ENCODE measurements at regions of chr17 and their contacts with region 1.

Region 1: GRCh38 chr17:47840740-47841603 is at the start of gene SCRN2:
- DNase-seq: peak; percentile 92
- ATAC-seq: peak; percentile 96
- H3K4me3 Mint-ChIP-seq: peak within 1 kb of the TSS; percentile 92
- H3K27ac Mint-ChIP-seq: peak within 1 kb of the TSS; percentile 91
- H3K4me1 Mint-ChIP-seq: peaks cover 27% of the 10 kb centered on the region
- H3K27me3 Mint-ChIP-seq: peaks cover 16% of the 10 kb centered on the region
- CTCF ChIP-seq: peak; percentile 99
- total RNA-seq, gene SCRN2: 21.0 to 23.8 TPM

Region 2: GRCh38 chr17:47717261-47717697 is 123.7 kb before region 1 on chr17:
- CTCF ChIA-PET with region 1: no interaction called
- POLR2A ChIA-PET with region 1: no interaction called
- intact Hi-C with region 1: no loop called
- DNase-seq: peak; percentile 80
- ATAC-seq: peak; percentile 15
- H3K4me3 Mint-ChIP-seq: peak overlapping the region; percentile 62
- H3K27ac Mint-ChIP-seq: peak overlapping the region; percentile 94
- H3K4me1 Mint-ChIP-seq: peaks cover 90% of the 10 kb centered on the region
- H3K27me3 Mint-ChIP-seq: no peaks in the 10 kb centered on the region
- CTCF ChIP-seq: peak; percentile 63

Region 3: DNA sequence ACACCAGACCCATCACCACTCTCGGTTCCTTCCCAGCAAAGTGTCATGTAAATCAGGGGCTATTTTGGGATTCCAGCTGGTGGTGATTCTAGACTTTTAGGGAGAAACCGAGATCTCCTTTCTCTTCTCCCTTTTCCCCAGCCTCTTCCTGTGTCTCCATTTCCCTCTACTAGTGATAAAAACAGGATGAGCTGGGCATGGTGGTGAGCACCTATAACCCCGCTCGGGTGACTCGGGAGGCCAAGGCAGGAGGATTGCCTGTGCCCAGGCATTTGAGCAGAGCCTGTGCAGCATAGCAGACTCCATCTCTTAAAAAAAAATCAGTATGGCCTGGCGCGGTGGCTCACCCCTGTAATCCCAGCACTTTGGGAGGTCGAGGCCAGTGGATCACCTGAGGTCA is 101.8 kb before region 1 on chr17:
- CTCF ChIA-PET with region 1: no interaction called
- POLR2A ChIA-PET with region 1: no interaction called
- intact Hi-C with region 1: no loop called
- DNase-seq: no peak
- ATAC-seq: no peak
- H3K4me3 Mint-ChIP-seq: peak overlapping the region; percentile 8
- H3K27ac Mint-ChIP-seq: peak overlapping the region; percentile 7
- H3K4me1 Mint-ChIP-seq: peaks cover 57% of the 10 kb centered on the region
- H3K27me3 Mint-ChIP-seq: no peaks in the 10 kb centered on the region
- CTCF ChIP-seq: no peak

Region 4: GRCh38 chr17:47862621-47863440 is 21.9 kb after region 1 on chr17:
- CTCF ChIA-PET with region 1: interaction called, 24 read pairs
- POLR2A ChIA-PET with region 1: interaction called, 3 read pairs
- intact Hi-C with region 1: no loop called
- DNase-seq: no peak
- ATAC-seq: no peak
- H3K4me3 Mint-ChIP-seq: no peak overlapping the region
- H3K27ac Mint-ChIP-seq: no peak overlapping the region
- H3K4me1 Mint-ChIP-seq: peaks cover 12% of the 10 kb centered on the region
- H3K27me3 Mint-ChIP-seq: peaks cover 13% of the 10 kb centered on the region
- CTCF ChIP-seq: no peak

Region 5: DNA sequence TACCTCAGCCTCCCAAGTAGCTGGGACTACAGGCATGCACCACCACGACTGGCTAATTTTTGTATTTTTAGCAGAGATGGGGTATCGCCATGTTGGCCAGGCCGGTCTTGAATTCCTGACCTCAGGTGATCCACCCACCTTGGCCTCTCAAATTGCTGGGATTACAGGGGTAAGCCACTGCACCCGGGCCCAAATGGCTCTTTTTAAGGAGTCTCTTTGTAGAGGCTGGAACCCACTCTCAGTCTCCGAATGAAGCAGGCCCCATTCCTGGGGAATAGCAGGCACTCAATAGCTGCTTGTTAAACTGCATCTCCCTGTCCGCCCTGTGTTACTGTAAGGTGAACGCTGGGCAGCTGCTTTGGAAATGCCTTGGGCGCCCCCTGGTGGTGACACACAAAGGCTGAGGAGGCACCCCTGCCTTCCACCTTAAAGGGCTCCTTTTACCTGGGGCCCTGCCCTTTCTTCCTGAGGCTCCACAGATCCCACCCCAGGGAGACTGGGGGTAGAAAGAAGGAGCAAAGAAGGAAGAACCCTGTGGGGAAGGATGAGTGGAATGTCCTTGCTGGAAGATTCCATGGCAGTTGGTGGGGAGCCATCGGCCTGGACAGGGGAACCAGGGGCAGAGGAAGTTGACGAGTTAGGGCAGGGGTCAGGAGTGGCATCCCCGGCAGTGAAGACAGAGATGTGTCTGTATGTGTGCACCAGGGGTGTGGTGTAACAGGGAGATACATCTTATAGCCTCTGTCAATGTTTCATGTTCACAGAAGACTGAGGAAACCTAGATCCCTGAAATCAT is 49.0 kb after region 1 on chr17:
- CTCF ChIA-PET with region 1: interaction called, 586 read pairs
- POLR2A ChIA-PET with region 1: interaction called, 15 read pairs
- intact Hi-C with region 1: loop called (anchors 1 kb)
- DNase-seq: peak; percentile 96
- ATAC-seq: peak; percentile 98
- H3K4me3 Mint-ChIP-seq: no peak overlapping the region
- H3K27ac Mint-ChIP-seq: no peak overlapping the region
- H3K4me1 Mint-ChIP-seq: peaks cover 30% of the 10 kb centered on the region
- H3K27me3 Mint-ChIP-seq: no peaks in the 10 kb centered on the region
- CTCF ChIP-seq: peak; percentile 95

Region 6: DNA sequence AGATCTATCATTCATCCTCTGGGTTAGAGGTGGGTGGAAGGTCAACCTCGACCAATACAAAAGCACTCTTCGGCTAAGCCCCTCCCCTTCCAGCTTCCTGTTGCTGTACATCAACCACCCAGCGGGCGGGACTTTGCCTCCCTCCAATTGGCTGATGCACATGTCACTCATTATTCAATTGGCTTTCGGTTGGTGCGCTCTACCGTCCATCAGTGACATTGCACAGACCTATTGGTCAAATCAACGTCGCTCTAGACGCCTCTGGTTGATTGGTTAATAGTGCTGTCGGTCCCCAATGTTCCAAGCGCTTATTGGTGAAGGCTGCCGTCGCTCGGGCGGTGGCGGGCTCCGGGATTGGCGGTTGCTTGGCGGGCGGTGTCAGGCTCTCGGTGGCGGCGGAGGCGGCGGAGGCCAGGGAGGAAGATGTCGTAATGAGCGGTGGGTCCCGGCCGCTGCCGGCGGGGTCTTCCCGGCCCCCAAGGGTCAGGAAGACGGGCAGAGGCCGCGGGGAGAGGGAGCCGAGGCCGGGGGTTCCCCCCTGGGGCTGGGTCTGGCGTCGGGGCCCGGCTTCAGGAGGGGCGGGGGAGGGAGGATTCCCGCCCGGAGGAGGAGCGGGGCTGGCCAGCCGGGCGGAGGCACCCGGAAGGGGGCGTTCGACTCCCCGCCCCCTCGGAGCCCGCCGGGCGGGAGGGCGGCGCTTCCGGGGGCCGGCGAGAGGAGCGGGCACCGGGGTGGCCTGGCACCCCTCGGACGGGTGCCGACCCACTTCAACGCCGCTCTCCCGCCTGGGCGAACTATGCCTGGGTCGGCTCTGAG is 55.1 kb after region 1 on chr17 and contains the start of gene SP2:
- CTCF ChIA-PET with region 1: interaction called, 586 read pairs
- POLR2A ChIA-PET with region 1: interaction called, 15 read pairs
- intact Hi-C with region 1: no loop called
- DNase-seq: peak; percentile 100
- ATAC-seq: peak; percentile 91
- H3K4me3 Mint-ChIP-seq: peak within 1 kb of the TSS; percentile 95
- H3K27ac Mint-ChIP-seq: peak within 1 kb of the TSS; percentile 96
- H3K4me1 Mint-ChIP-seq: peaks cover 46% of the 10 kb centered on the region
- H3K27me3 Mint-ChIP-seq: no peaks in the 10 kb centered on the region
- CTCF ChIP-seq: no peak
- total RNA-seq, gene SP2: 11.5 to 13.2 TPM

Region 7: DNA sequence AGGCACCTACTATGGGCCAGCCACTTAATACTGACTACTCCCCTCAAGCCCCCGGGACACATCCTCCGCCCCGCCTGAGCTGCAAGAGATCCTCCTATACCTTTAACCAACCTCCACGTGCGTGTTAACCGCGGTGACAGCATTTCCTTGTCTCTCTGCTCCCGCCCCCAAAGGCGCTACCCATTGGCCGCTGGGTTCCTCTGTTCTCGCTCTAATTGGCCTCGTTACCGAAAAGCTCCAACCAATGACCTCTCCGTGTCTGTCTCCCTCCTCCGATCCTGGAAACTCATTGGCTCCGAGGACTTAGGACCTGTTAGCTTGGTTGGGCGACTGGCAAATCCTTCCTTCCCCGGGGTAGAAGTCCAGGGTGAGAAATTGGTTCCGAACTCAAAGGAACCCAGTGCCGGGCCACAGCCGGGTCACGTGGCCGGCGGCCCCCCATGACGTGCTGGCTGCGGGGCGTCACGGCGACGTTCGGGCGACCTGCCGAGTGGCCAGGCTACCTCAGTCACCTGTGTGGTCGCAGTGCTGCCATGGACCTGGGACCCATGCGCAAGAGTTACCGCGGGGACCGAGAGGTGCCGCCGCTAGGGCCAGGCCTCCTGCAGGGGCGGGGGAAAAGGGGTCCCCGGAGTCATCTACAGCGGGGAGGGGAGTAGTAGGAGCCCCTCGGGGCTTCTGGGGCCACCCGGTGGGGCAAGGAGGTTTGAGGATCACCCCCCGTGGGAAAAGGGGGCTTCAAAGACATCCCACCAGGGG is 100.4 kb after region 1 on chr17 and contains the start of gene PNPO:
- CTCF ChIA-PET with region 1: interaction called, 20 read pairs
- POLR2A ChIA-PET with region 1: no interaction called
- intact Hi-C with region 1: no loop called
- DNase-seq: peak; percentile 100
- ATAC-seq: peak; percentile 98
- H3K4me3 Mint-ChIP-seq: peak within 1 kb of the TSS; percentile 84
- H3K27ac Mint-ChIP-seq: peak within 1 kb of the TSS; percentile 88
- H3K4me1 Mint-ChIP-seq: peaks cover 51% of the 10 kb centered on the region
- H3K27me3 Mint-ChIP-seq: no peaks in the 10 kb centered on the region
- CTCF ChIP-seq: no peak
- total RNA-seq, gene PNPO: 41.0 to 42.7 TPM